Panc1 (cell line): ENCODE measurements at regions of chr5 and their contacts with region 1.

Region 1: DNA sequence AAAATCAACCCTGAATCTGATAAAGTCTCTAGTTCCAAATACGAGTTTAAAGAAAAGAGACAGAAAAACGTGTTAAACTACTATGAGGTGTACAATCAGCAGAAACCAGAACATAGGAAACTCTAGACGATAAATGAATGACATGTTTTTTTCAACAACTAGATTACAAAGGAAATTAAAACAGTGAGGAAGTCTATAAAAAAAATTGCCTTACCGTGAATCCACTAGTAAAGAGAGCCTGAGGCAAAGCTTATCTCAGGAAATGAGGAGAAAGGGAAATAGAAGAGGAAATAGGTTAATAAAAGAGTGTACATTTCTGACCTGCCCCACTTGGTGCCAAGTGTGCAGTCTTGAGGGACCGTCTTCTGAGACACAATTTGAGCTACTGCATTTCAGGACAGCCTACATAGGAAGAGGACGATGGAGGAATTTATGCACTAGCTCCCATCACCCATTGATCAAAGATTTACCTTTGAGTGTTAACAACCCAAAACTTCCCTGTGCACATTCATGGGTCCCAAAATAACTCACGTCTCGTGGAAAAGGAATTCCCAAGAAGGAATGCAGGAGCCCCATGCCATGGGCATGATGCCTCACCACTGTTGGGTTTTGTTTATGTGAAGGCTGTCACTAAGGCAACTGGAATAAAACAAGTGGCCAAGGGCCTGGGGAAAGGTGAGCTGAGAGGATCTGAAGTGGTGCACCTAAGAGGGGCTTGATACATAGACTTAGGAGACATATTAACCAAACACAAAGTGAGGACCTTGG is 53.6 kb upstream of the SLC1A3 start:
- DNase-seq: no peak
- ATAC-seq: no peak
- H3K4me3 ChIP-seq: no peak overlapping the region
- H3K27ac ChIP-seq: no peak overlapping the region
- H3K4me1 ChIP-seq: no peaks in the 10 kb centered on the region
- H3K27me3 ChIP-seq: no peaks in the 10 kb centered on the region
- CTCF ChIP-seq: no peak

Region 2: GRCh38 chr5:36373527-36374086 is 179.2 kb before region 1 on chr5:
- CTCF ChIA-PET with region 1: no interaction called
- POLR2A ChIA-PET with region 1: no interaction called
- in situ Hi-C with region 1: no loop called
- intact Hi-C with region 1: no loop called
- DNase-seq: no peak
- ATAC-seq: no peak
- H3K4me3 ChIP-seq: no peak overlapping the region
- H3K27ac ChIP-seq: no peak overlapping the region
- H3K4me1 ChIP-seq: no peaks in the 10 kb centered on the region
- H3K27me3 ChIP-seq: no peaks in the 10 kb centered on the region; the same call in 1 of the 2 replicates
- CTCF ChIP-seq: no peak

Region 3: GRCh38 chr5:36584009-36584875 is 31.4 kb after region 1 on chr5:
- CTCF ChIA-PET with region 1: no interaction called
- POLR2A ChIA-PET with region 1: interaction called, 14 read pairs
- in situ Hi-C with region 1: no loop called
- intact Hi-C with region 1: no loop called
- DNase-seq: no peak
- ATAC-seq: no peak
- H3K4me3 ChIP-seq: no peak overlapping the region
- H3K27ac ChIP-seq: no peak overlapping the region
- H3K4me1 ChIP-seq: no peaks in the 10 kb centered on the region
- H3K27me3 ChIP-seq: peaks cover 6% of the 10 kb centered on the region
- CTCF ChIP-seq: no peak